ENCODE measurements at regions of chr12 and their contacts with region 1.

Region 1: DNA sequence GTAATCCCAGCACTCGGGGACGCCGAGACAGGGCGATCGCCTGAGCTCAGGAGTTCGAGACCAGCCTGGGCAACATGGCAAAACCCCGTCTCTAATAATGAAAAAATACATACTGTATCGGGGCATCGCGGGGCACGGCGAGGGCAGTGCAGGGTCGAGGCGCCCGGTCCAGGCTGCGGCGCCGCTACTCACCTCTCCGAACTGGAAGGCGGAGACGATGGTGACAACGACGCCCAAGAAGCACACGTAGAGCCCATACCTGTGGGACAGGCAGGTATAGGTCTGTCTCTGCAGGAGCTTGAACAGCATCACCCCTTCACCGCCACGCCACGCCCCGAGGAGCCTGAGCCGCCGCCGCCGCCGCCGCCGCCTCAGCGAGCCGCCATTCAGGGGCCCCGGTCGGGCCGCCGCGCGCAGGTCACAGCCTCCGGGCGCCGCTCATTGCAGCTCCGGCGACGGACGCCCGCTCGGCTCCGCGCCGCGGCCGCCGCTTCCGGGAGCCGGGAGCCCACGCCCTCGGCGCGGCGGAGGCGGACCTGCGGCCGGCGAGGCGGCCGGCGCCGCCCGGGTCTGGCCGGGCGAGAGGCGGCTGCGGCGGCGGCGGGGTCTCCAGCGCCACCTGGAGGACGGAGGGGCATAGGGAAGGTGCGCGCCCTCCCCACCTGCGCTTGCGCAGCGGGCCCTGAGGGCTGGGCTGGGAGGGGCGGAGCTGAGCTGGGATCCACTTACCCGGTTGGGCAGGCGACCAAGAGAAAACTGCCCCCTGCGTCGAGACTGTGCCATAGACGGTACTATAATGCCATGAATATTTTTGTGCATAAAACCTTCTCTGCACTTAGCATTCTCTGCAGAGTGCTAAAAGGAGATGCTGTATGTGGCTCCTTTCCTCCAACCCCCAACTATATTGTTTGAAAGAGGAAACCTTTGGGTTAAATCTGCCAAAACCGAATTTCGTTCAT is at the start of gene GNPTAB:
- DNase-seq: peak; percentile 94
- H3K4me3 ChIP-seq: peak within 1 kb of the TSS; percentile 25 to 68 (median 58)
- H3K27ac ChIP-seq: no peak within 1 kb of the TSS
- H3K4me1 ChIP-seq: peaks cover 4% of the 10 kb centered on the region
- H3K27me3 ChIP-seq: no peaks in the 10 kb centered on the region
- CTCF ChIP-seq: peak; percentile 76 to 78
- POLR2A ChIP-seq: peak; percentile 26
- total RNA-seq, gene GNPTAB: 39.2 and 39.5 TPM in 2 replicates

Region 2: GRCh38 chr12:101414533-101415119 is 416.0 kb before region 1 on chr12:
- CTCF ChIA-PET with region 1: interaction called, 7 read pairs
- POLR2A ChIA-PET with region 1: no interaction called
- dilution Hi-C with region 1: no loop called
- intact Hi-C with region 1: loop called (anchors 2 kb)
- DNase-seq: peak; percentile 76
- H3K4me3 ChIP-seq: no peak overlapping the region
- H3K27ac ChIP-seq: no peak overlapping the region
- H3K4me1 ChIP-seq: no peaks in the 10 kb centered on the region
- H3K27me3 ChIP-seq: peaks cover 0 to 4% of the 10 kb centered on the region in 2 experiments
- CTCF ChIP-seq: peak; percentile 30 to 39
- POLR2A ChIP-seq: no peak

Region 3: DNA sequence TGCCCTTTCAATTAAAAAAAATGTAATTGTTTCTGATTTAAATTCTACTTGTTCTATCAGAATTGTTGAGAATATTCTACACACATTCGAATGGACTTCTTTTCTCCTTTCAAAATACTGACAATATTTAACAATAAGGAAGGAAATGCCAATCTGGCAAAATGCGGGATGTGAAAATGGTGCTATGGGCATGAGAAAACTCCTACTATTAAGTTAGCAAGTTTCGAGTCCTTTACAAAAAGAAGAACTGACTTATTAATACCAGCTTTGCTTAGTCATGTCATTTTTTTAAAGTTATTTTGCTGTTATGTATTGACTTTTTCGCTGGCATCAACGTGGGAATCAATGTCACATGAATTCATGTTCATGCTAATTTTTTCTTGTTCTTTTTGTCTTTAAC is 391.4 kb before region 1 on chr12:
- CTCF ChIA-PET with region 1: no interaction called
- POLR2A ChIA-PET with region 1: no interaction called
- dilution Hi-C with region 1: no loop called
- intact Hi-C with region 1: no loop called
- DNase-seq: no peak
- H3K4me3 ChIP-seq: no peak overlapping the region
- H3K27ac ChIP-seq: no peak overlapping the region
- H3K4me1 ChIP-seq: no peaks in the 10 kb centered on the region
- H3K27me3 ChIP-seq: no peaks in the 10 kb centered on the region
- CTCF ChIP-seq: no peak
- POLR2A ChIP-seq: no peak

Region 4: GRCh38 chr12:101759396-101760047 is 71.1 kb before region 1 on chr12:
- CTCF ChIA-PET with region 1: interaction called, 14 read pairs
- POLR2A ChIA-PET with region 1: no interaction called
- dilution Hi-C with region 1: no loop called
- intact Hi-C with region 1: no loop called
- DNase-seq: peak; percentile 33
- H3K4me3 ChIP-seq: no peak overlapping the region
- H3K27ac ChIP-seq: no peak overlapping the region
- H3K4me1 ChIP-seq: no peaks in the 10 kb centered on the region
- H3K27me3 ChIP-seq: no peaks in the 10 kb centered on the region
- CTCF ChIP-seq: peak; percentile 53 to 64
- POLR2A ChIP-seq: no peak

Region 5: DNA sequence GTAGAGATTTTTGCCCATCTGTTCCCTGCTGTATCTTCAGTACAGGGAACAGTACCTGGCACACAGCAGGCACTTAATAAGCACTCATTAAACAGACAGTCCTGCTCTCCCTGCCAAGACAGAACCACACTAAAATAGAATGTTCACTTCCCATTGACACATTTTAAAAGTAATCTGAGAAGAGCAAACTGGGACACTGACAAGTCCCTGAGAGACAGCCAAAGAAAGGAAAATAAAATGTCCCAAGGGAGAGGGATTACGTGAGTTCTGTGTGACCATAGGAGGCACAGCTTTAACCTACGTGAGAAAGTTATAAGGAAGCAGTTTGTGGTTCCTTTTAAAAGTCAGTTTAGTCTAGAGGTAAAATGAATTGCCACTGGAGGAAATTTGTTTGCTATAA is 47.5 kb before region 1 on chr12:
- CTCF ChIA-PET with region 1: interaction called, 39 read pairs
- POLR2A ChIA-PET with region 1: interaction called, 3 read pairs
- dilution Hi-C with region 1: no loop called
- intact Hi-C with region 1: no loop called
- DNase-seq: no peak
- H3K4me3 ChIP-seq: no peak overlapping the region
- H3K27ac ChIP-seq: no peak overlapping the region
- H3K4me1 ChIP-seq: no peaks in the 10 kb centered on the region
- H3K27me3 ChIP-seq: no peaks in the 10 kb centered on the region
- CTCF ChIP-seq: no peak
- POLR2A ChIP-seq: no peak

Region 6: DNA sequence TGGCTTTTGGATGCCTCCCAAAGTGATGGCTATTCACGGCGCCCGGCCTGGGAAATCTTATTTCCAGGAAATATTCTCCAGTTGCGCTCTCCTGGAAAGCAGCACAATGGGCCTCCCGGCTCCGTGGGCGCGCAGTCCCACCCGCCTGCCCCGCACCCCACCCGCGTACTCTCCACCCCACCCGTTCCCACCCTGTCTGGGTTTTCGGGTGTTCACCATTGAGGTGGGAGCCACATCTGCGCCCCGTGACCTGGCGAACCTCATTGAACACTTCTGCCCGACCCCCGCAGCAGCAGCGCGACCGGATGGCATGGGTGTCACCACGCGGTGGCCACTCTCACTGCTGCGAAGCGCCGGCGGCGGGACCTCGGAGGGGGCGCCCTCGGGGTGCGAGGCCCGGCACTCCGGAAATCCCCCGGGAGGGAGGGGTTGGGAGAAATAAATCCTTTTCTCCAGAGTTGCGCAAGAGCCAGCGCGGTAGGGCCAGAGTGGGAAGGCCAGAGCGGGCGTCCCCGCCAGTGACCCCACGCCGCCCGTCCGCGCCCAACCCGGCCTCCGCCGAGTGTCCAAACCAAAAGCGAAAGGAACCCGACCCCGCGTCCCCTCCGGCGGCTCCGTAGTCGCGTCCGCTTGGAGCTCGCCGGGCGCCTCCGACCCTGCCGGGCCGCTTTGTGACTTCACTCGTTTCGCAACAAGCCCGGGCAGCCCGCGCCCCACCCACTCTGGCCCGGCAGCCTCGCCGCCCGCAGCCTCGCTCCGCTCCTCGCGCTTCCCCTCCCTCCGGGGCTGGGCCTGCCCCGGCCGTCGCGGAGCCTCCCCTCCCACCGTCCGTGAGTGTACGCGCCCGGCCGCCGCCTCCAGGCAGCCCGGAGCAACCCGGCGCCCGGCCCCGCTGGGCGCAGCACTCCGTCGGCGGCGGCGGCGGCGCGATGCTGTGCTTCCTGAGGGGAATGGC is 46.5 kb after region 1 on chr12 and contains the start of gene DRAM1:
- CTCF ChIA-PET with region 1: interaction called, 15 read pairs
- POLR2A ChIA-PET with region 1: interaction called, 3 read pairs
- dilution Hi-C with region 1: no loop called
- intact Hi-C with region 1: loop called (anchors 1 kb)
- DNase-seq: peak; percentile 88
- H3K4me3 ChIP-seq: peak within 1 kb of the TSS; percentile 5 to 76 (median 55)
- H3K27ac ChIP-seq: peak within 1 kb of the TSS; percentile 93
- H3K4me1 ChIP-seq: peaks cover 26% of the 10 kb centered on the region
- H3K27me3 ChIP-seq: no peaks in the 10 kb centered on the region
- CTCF ChIP-seq: peak in 1 of 2 donors; percentile 19
- POLR2A ChIP-seq: peak; percentile 92
- total RNA-seq, gene DRAM1: 42.4 and 46.3 TPM in 2 replicates